Naive thymus-derived CD4-positive, alpha-beta T cell (primary cell): ENCODE measurements at regions of chr7 and their contacts with region 1.

Region 1: DNA sequence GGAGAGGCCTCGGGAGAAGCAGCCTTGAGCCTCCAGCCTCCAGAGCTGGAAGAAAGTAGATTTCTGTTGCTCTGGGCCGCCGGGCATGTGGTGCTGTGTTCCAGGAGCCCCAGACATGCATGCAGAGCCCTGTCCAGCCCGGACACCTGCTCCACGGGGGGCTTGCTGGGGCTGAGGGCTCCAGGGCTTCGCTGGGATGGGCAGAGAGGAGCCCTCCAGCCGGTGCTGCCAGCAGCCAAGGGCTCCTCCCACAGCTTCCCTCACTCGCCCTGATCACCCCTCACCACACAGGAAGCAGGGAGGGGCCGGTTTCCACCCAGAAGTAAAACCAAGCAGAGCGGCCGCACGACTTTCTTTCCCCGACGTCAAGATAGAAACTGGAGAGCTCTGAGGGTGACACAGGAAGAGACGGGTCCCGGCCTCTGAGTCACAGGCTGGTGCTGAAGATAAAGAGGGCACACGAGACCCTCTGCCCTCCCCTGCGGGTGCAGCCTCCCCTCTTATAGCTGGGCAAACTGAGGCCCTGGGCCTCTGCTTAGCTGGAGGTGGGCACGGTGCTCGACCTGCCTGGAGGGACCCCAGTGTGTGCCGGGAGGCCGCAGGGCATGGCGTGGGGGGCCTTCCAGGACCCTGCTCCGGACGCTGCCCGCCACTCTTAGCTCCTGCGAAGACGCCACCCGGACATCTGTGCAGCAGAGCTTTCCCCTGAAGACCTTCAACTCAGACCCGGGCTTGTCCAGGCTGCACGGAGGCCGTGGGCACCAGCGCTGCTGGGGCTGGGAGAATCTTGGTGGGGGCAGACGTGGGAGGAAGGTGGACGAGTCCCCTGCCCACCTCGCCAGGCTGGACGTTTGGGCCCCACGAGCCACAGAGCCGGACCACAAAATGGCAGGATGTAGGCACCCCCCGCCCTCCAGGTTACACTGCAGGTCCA is 31.1 kb downstream of the ADAP1 start:
- DNase-seq: peak; percentile 67 to 91 (median 90)
- ATAC-seq: peak; percentile 93
- H3K4me3 ChIP-seq: peak overlapping the region; percentile 84
- H3K4me3 Mint-ChIP-seq: peak overlapping the region; percentile 77 to 90 (median 88)
- H3K27ac ChIP-seq: peak overlapping the region; percentile 84
- H3K27ac Mint-ChIP-seq: peak overlapping the region; percentile 89 to 96 (median 92)
- H3K4me1 ChIP-seq: peaks cover 30% of the 10 kb centered on the region in 2 donors
- H3K4me1 Mint-ChIP-seq: peaks cover 19 to 34% (median 25%) of the 10 kb centered on the region in 7 donors
- H3K27me3 ChIP-seq: no peaks in the 10 kb centered on the region
- H3K27me3 Mint-ChIP-seq: no peaks in the 10 kb centered on the region

Region 2: GRCh38 chr7:148932-149855 is 774.2 kb before region 1 on chr7:
- CTCF ChIA-PET with region 1: no interaction called
- POLR2A ChIA-PET with region 1: no interaction called
- intact Hi-C with region 1: loop called (anchors 2 to 5 kb)
- DNase-seq: peak; percentile 97 to 99 (median 99)
- ATAC-seq: peak; percentile 97
- H3K4me3 ChIP-seq: peak overlapping the region; percentile 52
- H3K4me3 Mint-ChIP-seq: peak overlapping the region; percentile 80 to 97 (median 91)
- H3K27ac ChIP-seq: peak overlapping the region; percentile 82
- H3K27ac Mint-ChIP-seq: peak overlapping the region; percentile 94 to 100 (median 99)
- H3K4me1 ChIP-seq: peaks cover 18 to 19% of the 10 kb centered on the region in 2 donors
- H3K4me1 Mint-ChIP-seq: peaks cover 9 to 25% (median 20%) of the 10 kb centered on the region in 7 donors
- H3K27me3 ChIP-seq: no peaks in the 10 kb centered on the region
- H3K27me3 Mint-ChIP-seq: peaks cover 0 to 4% (median 0%) of the 10 kb centered on the region in 5 donors

Region 3: GRCh38 chr7:305410-306151 is 617.8 kb before region 1 on chr7:
- CTCF ChIA-PET with region 1: no interaction called
- POLR2A ChIA-PET with region 1: no interaction called
- intact Hi-C with region 1: no loop called
- DNase-seq: no peak
- ATAC-seq: no peak
- H3K4me3 ChIP-seq: no peak overlapping the region
- H3K4me3 Mint-ChIP-seq: no peak overlapping the region
- H3K27ac ChIP-seq: no peak overlapping the region
- H3K27ac Mint-ChIP-seq: no peak overlapping the region
- H3K4me1 ChIP-seq: no peaks in the 10 kb centered on the region
- H3K4me1 Mint-ChIP-seq: no peaks in the 10 kb centered on the region
- H3K27me3 ChIP-seq: no peaks in the 10 kb centered on the region
- H3K27me3 Mint-ChIP-seq: peaks cover 0 to 4% (median 0%) of the 10 kb centered on the region in 5 donors

Region 4: DNA sequence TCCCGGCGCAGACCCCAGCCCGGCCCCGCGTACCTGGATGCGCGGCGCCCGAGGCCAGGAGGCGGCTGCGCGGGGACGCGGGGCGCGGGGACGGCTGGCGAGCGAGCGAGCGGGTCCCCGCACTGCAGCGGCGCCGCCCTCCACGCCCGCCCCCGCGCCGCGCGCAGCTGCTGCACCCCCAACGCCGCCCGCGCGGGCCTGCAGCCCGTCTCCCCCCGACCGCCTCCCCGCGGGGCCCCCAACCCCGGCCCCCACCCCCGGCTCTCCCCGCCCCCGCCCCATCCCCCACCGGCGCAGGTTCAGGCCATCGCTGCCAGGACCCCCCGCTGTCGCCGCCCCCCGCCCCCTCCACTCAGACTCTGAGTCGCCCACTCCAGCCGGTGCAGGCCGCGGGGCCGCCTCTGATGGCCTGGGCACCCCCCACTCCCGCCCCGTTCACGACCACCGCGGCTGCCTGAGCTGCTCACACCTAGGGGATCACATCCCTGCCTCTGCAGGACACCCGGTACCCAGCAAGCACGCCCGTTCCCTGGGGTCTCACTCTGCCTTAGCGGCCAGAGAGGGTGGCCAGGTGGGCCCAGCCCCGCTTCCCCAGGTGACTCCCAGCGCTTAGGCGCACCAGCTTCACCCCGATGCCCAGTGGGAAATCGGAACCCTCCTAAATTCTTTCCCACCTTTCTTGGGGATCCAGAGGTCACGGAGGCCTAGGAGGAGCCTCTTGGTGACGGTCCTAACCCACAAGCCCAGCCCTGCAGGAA is 210.8 kb before region 1 on chr7:
- CTCF ChIA-PET with region 1: no interaction called
- POLR2A ChIA-PET with region 1: no interaction called
- intact Hi-C with region 1: loop called in 1 of 2 experiments (anchors 1 kb)
- DNase-seq: peak in 4 of 9 donors; percentile 28 to 43 (median 42)
- ATAC-seq: peak; percentile 75
- H3K4me3 ChIP-seq: peak overlapping the region; percentile 24
- H3K4me3 Mint-ChIP-seq: peak overlapping the region in 9 of 10 donors; percentile 9 to 86 (median 68)
- H3K27ac ChIP-seq: peak overlapping the region; percentile 62
- H3K27ac Mint-ChIP-seq: peak overlapping the region in 6 of 9 donors; percentile 53 to 87 (median 82)
- H3K4me1 ChIP-seq: peaks cover 0 to 5% of the 10 kb centered on the region in 2 donors
- H3K4me1 Mint-ChIP-seq: peaks cover 5 to 34% (median 15%) of the 10 kb centered on the region in 7 donors
- H3K27me3 ChIP-seq: no peaks in the 10 kb centered on the region
- H3K27me3 Mint-ChIP-seq: peaks cover 0 to 5% (median 0%) of the 10 kb centered on the region in 5 donors

Region 5: GRCh38 chr7:876167-876967 is 47.0 kb before region 1 on chr7 and contains the start of gene GET4:
- CTCF ChIA-PET with region 1: interaction called, 3 read pairs
- POLR2A ChIA-PET with region 1: interaction called, 7 read pairs
- intact Hi-C with region 1: loop called (anchors 1 kb)
- DNase-seq: peak; percentile 97 to 100 (median 99)
- ATAC-seq: peak; percentile 90
- H3K4me3 ChIP-seq: peak within 1 kb of the TSS; percentile 65
- H3K4me3 Mint-ChIP-seq: peak within 1 kb of the TSS; percentile 79 to 98 (median 90)
- H3K27ac ChIP-seq: peak within 1 kb of the TSS; percentile 95
- H3K27ac Mint-ChIP-seq: peak within 1 kb of the TSS; percentile 57 to 94 (median 90)
- H3K4me1 ChIP-seq: peaks cover 14 to 33% of the 10 kb centered on the region in 2 donors
- H3K4me1 Mint-ChIP-seq: peaks cover 11 to 42% (median 31%) of the 10 kb centered on the region in 7 donors
- H3K27me3 ChIP-seq: no peaks in the 10 kb centered on the region
- H3K27me3 Mint-ChIP-seq: no peaks in the 10 kb centered on the region
- total RNA-seq, gene GET4: 42.6 to 82.1 (median 52.6) TPM

Region 6: DNA sequence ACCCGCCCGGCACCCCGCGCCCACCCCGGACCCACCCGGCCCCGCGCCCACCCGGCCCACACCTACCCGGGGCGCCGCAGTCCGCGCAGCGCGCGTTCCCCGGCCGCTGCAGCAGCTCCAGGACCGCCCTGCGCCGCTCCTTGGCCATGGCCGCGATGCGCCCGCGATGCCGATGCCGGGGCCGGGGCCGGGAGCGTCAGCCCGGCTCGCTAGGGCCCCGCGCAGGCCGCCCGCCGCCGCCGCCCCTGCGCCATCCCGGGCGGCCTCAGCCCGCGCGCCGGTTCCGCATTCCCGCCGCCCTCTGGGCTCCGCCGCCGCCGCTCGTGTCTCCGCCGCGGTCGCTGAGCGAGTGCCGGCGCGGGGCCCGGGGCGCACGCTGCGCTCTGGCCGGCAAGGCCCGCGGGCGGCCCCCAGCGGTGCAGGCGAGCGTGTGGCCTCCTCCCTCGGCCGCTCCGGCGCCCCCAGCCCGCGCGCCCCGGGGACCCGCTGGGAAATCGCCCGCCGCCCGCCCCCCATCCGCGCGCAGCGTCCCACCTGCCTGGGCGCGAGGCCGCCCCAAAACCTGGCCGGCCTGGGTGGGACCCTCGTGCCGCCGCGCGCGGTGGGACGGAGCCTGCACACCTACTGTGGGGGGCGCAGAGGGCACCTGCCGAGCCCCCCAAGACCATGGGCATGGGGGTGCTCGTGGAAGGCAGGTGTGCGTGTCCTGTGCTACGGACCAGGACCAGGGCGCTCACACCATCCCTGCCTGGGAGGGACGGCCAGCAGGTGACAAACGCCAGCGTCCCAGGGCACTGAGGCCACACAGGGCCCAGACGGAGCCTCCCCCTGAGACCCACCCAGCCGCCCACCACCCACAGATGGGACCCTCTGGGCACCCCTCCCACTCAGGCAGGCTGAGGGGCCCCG is 31.2 kb after region 1 on chr7 and contains the start of gene ADAP1:
- CTCF ChIA-PET with region 1: interaction called, 3 read pairs
- POLR2A ChIA-PET with region 1: interaction called, 3 read pairs
- intact Hi-C with region 1: loop called (anchors 1 kb)
- DNase-seq: peak in 7 of 9 donors; percentile 41 to 76 (median 56)
- ATAC-seq: peak; percentile 84
- H3K4me3 ChIP-seq: no peak within 1 kb of the TSS
- H3K4me3 Mint-ChIP-seq: peak within 1 kb of the TSS; percentile 51 to 86 (median 65)
- H3K27ac ChIP-seq: no peak within 1 kb of the TSS
- H3K27ac Mint-ChIP-seq: peak within 1 kb of the TSS in 2 of 9 donors; percentile 32 to 33
- H3K4me1 ChIP-seq: no peaks in the 10 kb centered on the region
- H3K4me1 Mint-ChIP-seq: peaks cover 0 to 12% (median 0%) of the 10 kb centered on the region in 7 donors
- H3K27me3 ChIP-seq: no peaks in the 10 kb centered on the region
- H3K27me3 Mint-ChIP-seq: peaks cover 0 to 13% (median 8%) of the 10 kb centered on the region in 5 donors
- total RNA-seq, gene ADAP1: 5.0 to 68.6 (median 17.3) TPM

Region 7: DNA sequence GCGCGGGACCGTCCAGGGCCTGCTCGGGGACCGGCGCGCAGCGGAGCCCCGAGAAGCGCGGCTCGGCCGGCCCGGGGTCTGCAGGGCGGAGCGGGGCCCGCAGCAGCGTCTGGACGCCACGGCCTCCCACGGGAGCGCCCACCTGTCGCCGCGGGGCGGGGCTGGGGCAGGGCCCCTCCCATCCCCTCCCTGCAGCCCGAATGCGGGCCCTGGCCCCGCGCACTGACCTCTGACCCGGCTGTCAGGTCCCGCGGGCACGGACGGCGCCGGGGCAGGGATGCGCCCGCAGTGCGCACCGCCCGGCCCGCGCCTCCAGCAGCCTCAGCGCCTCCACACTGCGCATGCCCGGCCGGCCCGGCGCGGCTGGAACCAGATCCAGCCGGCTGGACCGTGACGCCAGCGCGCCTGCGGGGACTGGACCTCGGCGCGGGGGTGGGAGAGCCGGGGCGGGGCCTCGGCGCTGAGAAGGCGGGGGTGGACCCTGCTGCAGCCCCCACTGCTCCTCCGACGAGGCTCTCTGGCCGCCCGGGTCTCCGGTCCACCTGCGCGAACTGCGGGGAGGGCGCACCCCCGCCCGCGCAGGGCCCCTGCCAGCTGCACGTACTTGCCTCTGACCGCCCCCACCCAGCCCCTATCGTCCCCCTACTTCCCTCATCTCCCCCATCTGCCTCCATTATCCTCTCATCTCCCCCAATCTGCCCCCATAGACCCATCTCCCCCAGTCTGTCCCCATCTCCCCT is 104.8 kb after region 1 on chr7:
- CTCF ChIA-PET with region 1: no interaction called
- POLR2A ChIA-PET with region 1: interaction called, 3 read pairs
- intact Hi-C with region 1: loop called in 1 of 2 experiments (anchors 5 kb)
- DNase-seq: peak; percentile 50 to 94 (median 81)
- ATAC-seq: peak; percentile 83
- H3K4me3 ChIP-seq: peak overlapping the region; percentile 64
- H3K4me3 Mint-ChIP-seq: peak overlapping the region; percentile 72 to 90 (median 80)
- H3K27ac ChIP-seq: peak overlapping the region; percentile 80
- H3K27ac Mint-ChIP-seq: peak overlapping the region in 7 of 9 donors; percentile 56 to 92 (median 86)
- H3K4me1 ChIP-seq: peaks cover 20% of the 10 kb centered on the region in 2 donors
- H3K4me1 Mint-ChIP-seq: peaks cover 25 to 59% (median 44%) of the 10 kb centered on the region in 7 donors
- H3K27me3 ChIP-seq: no peaks in the 10 kb centered on the region
- H3K27me3 Mint-ChIP-seq: no peaks in the 10 kb centered on the region

Region 8: DNA sequence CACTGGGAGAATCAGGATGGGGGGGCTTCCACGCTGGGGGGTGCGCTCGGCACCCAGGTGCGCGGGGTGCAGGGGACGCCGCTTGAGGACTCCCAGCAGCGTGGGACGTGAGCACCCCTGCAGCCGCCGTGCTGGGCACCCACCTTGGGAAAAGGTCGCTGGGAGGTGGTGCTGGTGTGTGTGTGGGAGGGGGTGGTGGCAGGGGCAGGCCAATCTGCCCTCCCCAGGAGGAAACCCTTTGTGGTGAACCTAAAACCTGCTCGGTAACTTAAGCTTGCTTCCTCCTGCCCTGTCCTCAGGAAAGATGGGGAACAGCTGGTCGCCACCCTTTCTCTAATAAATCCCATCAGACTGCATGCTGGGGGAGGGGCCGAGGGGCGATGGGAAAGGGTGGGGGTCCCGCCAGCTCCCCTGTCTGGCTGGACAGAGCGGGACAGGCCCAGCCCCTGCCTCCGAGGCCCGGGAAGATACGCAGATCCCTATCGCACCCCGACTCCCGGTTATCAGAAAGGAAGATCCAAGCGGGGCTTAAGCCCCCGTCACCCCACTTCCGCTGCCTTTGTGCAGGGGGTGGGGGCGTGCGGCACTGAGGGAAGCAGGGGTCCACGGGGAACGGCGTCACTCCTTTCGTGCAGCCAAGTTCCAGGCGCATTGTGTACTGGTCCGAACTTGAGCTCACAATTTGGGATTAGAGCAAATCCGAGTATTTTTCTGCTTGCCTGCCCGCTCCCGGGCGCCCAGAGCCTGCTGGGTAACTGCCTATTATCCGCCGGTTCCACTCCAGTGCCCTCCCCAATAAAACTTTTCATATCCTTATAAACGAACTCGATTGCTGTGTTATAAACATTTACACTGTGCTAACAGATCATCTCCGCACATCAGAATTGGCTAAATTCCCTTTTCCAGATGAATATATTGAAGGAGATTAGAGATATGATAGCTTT is 373.9 kb after region 1 on chr7:
- CTCF ChIA-PET with region 1: no interaction called
- POLR2A ChIA-PET with region 1: no interaction called
- intact Hi-C with region 1: no loop called
- DNase-seq: no peak
- ATAC-seq: no peak
- H3K4me3 ChIP-seq: no peak overlapping the region
- H3K4me3 Mint-ChIP-seq: no peak overlapping the region
- H3K27ac ChIP-seq: no peak overlapping the region
- H3K27ac Mint-ChIP-seq: no peak overlapping the region
- H3K4me1 ChIP-seq: no peaks in the 10 kb centered on the region
- H3K4me1 Mint-ChIP-seq: no peaks in the 10 kb centered on the region
- H3K27me3 ChIP-seq: no peaks in the 10 kb centered on the region
- H3K27me3 Mint-ChIP-seq: peaks cover 3 to 21% (median 8%) of the 10 kb centered on the region in 5 donors